Mammary epithelial cell (primary cell): ENCODE measurements at regions of chr12 and their contacts with region 1.

Region 1: GRCh38 chr12:50222275-50222795 is 55.2 kb upstream of the CERS5 start:
- DNase-seq: peak; percentile 86
- H3K4me3 ChIP-seq: peak overlapping the region; percentile 76 to 96 (median 78)
- H3K27ac ChIP-seq: peak overlapping the region; percentile 100
- H3K4me1 ChIP-seq: peaks cover 38% of the 10 kb centered on the region
- H3K27me3 ChIP-seq: no peaks in the 10 kb centered on the region
- CTCF ChIP-seq: peak in 1 of 2 donors; percentile 56

Region 2: GRCh38 chr12:50084775-50085614 is 137.3 kb before region 1 on chr12 and contains the start of gene SMARCD1:
- CTCF ChIA-PET with region 1: no interaction called
- dilution Hi-C with region 1: no loop called
- in situ Hi-C with region 1: no loop called
- intact Hi-C with region 1: loop called (anchors 5 kb)
- DNase-seq: peak; percentile 86
- H3K4me3 ChIP-seq: peak within 1 kb of the TSS; percentile 47 to 77 (median 66)
- H3K27ac ChIP-seq: peak within 1 kb of the TSS; percentile 57
- H3K4me1 ChIP-seq: peaks cover 37% of the 10 kb centered on the region
- H3K27me3 ChIP-seq: no peaks in the 10 kb centered on the region
- CTCF ChIP-seq: peak; percentile 15 to 72
- total RNA-seq, gene SMARCD1: 106 to 107 TPM

Region 3: DNA sequence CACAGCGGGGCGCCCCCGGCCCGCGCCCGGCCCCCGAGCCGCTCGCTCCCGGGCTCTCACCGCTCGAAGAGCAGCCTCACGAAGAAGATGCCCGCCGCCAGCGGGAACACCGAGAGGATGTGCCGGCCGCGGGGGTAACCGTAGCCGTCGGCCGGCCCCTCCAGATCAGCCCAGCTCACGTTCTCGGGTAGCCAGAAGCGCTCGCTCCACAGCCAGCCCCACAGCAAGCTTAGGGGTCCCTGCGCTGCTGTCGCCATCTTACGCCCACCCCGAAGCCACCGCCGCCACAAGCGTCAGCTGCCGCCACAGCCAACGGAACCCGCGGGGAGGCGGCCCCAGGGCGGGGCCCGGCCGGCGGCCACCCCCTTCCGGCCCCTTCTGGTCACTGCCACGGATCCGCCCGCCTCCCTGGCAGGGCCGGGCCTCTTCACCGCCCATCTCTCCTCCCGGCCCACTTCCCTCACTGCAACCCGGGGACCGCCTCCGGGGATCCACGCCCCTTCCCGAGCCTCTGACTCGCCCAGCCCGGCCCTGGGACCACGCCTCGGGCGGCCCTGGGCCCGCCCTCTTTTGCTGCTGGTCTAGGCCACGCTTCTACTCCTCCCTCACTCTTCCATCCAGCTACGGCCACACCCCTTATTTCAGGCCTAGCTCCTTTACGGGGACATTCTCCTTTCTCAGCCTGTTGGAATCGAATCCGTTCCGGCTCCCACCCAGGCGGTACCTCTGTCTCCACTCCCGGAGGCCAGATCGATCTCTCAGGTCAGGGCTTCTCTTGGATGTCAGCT is 55.1 kb before region 1 on chr12 and contains the start of gene CERS5:
- CTCF ChIA-PET with region 1: no interaction called
- dilution Hi-C with region 1: no loop called
- in situ Hi-C with region 1: no loop called
- intact Hi-C with region 1: loop called (anchors 2 kb)
- DNase-seq: peak; percentile 99
- H3K4me3 ChIP-seq: peak within 1 kb of the TSS; percentile 54 to 70 (median 62)
- H3K27ac ChIP-seq: peak within 1 kb of the TSS; percentile 76
- H3K4me1 ChIP-seq: peaks cover 7% of the 10 kb centered on the region
- H3K27me3 ChIP-seq: no peaks in the 10 kb centered on the region
- CTCF ChIP-seq: peak in 1 of 2 donors; percentile 13
- total RNA-seq, gene CERS5: 29.2 to 65.7 TPM

Region 4: DNA sequence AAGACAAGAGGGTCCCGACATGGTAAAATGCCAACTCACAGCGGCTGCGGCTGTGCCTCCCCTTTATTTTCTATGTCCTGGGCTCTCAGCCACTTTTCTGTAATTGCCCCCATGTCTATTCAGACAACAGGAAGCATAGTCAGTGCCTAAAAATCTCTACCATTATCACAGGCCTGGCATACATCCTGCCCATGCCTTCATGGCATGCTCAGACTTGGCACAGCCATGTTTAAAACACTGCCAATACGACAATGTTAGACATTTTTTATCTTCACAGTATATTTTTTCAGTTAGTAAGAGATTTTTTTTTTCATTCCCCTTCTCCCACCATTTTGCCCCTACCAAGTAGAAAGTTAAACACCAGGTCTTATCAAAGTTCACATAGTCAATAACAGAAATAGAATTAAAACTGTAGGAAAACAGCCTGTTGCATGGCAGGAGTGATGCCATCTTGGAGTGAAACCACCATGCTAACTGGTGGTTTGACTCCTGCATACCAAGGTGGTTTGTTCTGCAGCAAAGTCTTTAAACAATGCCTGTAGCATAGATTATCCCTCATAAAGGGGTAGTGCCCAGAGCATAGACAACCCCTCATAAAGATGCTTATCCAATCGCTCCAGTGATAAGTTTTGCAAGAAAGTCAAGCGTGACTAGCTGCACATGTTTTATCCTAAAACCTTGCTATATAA is 36.2 kb before region 1 on chr12:
- CTCF ChIA-PET with region 1: no interaction called
- dilution Hi-C with region 1: no loop called
- in situ Hi-C with region 1: no loop called
- intact Hi-C with region 1: no loop called
- DNase-seq: peak; percentile 62
- H3K4me3 ChIP-seq: no peak overlapping the region
- H3K27ac ChIP-seq: peak overlapping the region; percentile 62
- H3K4me1 ChIP-seq: peaks cover 45% of the 10 kb centered on the region
- H3K27me3 ChIP-seq: no peaks in the 10 kb centered on the region
- CTCF ChIP-seq: no peak

Region 5: DNA sequence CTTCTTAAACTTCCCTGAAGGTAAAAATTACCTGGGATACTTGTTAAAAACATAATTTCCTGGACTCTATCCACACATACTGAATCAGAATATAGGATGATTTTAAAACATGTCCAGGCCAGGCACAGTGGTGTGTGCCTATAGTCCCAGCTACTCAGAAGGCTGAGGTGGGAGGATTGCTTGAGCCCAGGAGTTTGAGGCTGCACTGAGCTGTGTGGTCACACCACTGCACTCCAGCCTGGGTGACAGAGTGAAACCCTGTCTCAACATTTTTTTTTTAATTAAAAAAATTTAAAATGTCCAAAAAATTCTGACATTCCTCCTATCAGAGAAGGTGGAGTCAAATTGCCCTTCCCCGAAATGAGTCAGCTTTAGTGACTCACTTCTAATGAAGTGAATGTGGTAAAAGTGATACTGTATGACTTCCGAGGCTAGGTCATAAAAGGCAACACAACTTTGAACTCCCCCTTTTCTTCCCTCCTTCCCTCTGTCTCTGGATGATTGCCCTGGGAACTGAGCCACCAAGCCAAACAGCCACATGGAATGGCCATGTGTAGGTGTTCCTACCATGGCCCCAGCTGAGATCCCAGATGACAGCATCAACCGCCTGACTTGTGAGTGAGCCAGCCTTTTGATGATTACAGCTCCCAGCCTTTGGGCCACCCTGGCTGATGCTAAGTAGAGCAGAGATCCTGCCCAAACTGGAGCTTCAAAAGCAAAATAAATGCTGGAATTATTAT is 24.7 kb after region 1 on chr12:
- CTCF ChIA-PET with region 1: interaction called, 4 read pairs
- dilution Hi-C with region 1: no loop called
- in situ Hi-C with region 1: no loop called
- intact Hi-C with region 1: loop called (anchors 1 kb)
- DNase-seq: peak; percentile 99
- H3K4me3 ChIP-seq: no peak overlapping the region
- H3K27ac ChIP-seq: peak overlapping the region; percentile 99
- H3K4me1 ChIP-seq: peaks cover 32% of the 10 kb centered on the region
- H3K27me3 ChIP-seq: no peaks in the 10 kb centered on the region
- CTCF ChIP-seq: no peak

Region 6: GRCh38 chr12:50283229-50283923 is 61.0 kb after region 1 on chr12 and contains the start of gene LIMA1:
- CTCF ChIA-PET with region 1: no interaction called
- dilution Hi-C with region 1: no loop called
- in situ Hi-C with region 1: no loop called
- intact Hi-C with region 1: loop called (anchors 1 kb)
- DNase-seq: peak; percentile 87
- H3K4me3 ChIP-seq: peak within 1 kb of the TSS; percentile 67 to 92 (median 80)
- H3K27ac ChIP-seq: peak within 1 kb of the TSS; percentile 50
- H3K4me1 ChIP-seq: peaks cover 16% of the 10 kb centered on the region
- H3K27me3 ChIP-seq: no peaks in the 10 kb centered on the region
- CTCF ChIP-seq: peak; percentile 8 to 53
- total RNA-seq, gene LIMA1: 398 to 425 TPM

Region 7: DNA sequence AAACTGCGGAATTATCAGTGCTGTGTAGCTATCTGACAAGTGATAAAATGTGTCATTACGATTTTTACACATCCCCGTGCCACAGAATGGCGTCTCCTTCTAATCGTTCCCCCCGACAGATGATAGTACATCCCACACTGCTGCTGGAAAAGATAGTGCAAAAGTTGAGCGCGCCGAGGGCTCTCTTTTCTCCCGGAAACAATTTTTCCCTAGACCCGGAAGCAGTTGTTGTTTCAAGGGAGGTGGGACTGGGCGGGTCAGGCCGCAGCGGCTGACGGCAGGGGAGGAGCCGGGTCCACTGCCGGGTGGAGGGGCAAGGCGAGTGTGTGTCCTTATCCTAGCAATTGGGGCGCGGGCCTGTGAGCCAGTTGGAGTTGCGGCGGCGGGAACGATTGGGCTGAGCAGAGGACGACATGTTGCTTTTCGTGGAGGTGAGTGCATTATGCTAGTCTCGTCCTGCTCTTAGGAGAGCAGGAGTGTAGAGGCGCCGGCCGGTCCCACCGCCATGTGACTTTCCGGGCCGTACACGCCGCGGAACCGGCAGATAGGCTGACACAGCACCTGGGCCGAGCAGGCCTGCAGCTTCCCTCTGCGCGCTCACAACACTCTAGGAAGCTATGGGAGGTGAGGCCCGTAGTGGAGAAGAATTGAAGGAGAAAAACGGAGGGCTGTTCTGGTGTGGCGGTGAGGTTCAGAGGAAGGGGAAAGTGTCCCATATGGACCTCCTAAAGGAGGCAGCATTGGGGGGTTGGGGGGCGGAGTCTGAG is 178.4 kb after region 1 on chr12 and contains the start of gene LARP4:
- CTCF ChIA-PET with region 1: no interaction called
- dilution Hi-C with region 1: no loop called
- in situ Hi-C with region 1: loop called in 1 of 2 experiments (anchors 25 kb)
- intact Hi-C with region 1: loop called (anchors 5 kb)
- DNase-seq: peak; percentile 95
- H3K4me3 ChIP-seq: peak within 1 kb of the TSS; percentile 80 to 95 (median 81)
- H3K27ac ChIP-seq: peak within 1 kb of the TSS; percentile 81
- H3K4me1 ChIP-seq: peaks cover 7% of the 10 kb centered on the region
- H3K27me3 ChIP-seq: no peaks in the 10 kb centered on the region
- CTCF ChIP-seq: no peak
- total RNA-seq, gene LARP4: 45.0 to 65.0 TPM